Gastrocnemius medialis (tissue), 4 donors: ENCODE measurements at regions of chr13 and their contacts with region 1.

Region 1: DNA sequence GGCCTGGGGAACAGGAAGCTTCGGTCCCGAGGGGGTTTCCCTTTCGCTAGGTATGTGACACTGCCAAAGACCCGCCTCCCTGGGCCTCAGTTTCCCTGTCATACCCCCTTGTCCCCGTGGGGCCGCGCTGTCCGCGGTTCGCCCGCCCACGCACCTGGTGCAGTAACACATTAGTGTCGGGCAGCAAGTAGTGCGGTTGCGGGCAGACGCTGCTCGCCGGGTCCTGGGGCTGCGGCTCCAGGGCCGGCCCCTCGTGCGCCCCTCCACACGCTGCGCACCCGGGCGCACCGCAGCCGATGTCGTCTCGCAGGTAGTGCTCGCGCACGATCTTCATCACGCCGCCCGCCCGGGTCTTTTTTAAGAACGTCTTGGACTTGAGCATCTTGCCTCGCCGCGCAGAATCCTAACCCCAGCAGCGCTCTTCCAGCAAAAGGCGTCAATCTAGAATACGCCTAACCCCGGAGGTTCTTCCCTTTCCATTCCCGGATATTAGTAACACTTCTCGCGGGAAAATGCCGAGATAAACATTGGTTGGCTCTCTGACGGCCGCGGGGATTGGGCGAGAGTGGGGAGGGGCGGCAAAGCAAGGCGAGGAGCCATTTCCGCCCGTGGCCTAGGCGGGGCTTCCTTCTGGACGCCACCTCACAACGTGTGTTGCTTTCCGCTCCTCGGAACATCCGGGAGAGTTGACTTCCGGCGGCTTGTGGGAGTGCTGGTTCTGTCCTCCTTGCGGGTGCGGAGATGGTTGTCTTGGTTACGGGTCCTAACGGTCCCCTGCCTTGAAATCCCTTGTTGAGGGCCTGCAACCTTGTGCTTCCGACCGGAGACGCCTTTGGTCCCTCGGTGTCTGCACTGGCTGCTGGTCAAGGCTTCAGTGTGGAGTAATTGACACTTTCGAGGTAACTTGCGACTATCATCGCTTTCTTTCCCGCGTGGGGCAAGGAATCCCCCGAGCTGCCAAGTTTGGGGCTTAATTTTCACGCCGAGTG is at the starts of genes DIS3 and PIBF1:
- DNase-seq: peak; percentile 96
- ATAC-seq: peak; percentile 99 to 100
- H3K4me3 ChIP-seq: peak within 1 kb of the TSS; percentile 76 to 89 (median 86)
- H3K27ac ChIP-seq: peak within 1 kb of the TSS; percentile 86 to 91 (median 88)
- H3K4me1 ChIP-seq: peaks cover 26 to 27% of the 10 kb centered on the region in 2 donors
- H3K27me3 ChIP-seq: no peaks in the 10 kb centered on the region
- CTCF ChIP-seq: peak in 2 of 5 experiments; percentile 13 to 23
- POLR2A ChIP-seq: peak; percentile 77 to 83
- total RNA-seq, gene DIS3: 11.6 to 17.6 (median 17.0) TPM
- total RNA-seq, gene PIBF1: 5.3 to 10.0 (median 7.4) TPM

Region 2: DNA sequence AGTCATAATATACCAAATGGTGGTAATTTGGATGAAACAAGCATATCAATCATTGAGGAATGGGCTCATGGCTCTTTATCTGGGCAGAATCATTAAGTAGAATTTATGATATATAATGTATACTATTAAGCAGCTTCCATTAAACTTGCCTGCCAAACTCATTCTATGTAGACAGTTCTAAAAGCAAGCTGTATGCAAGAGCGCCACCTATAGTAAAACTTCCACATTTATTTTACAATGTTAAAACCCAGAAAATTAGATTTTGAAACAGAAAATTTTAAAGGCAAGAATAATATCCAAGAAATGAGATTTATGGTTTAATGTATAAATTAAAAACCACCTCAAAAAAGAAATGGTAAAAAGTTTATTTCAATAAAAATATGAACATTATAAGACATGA is 215.9 kb before region 1 on chr13:
- in situ Hi-C with region 1: no loop called
- intact Hi-C with region 1: no loop called
- DNase-seq: no peak
- ATAC-seq: no peak
- H3K4me3 ChIP-seq: no peak overlapping the region
- H3K27ac ChIP-seq: no peak overlapping the region
- H3K4me1 ChIP-seq: no peaks in the 10 kb centered on the region
- H3K27me3 ChIP-seq: no peaks in the 10 kb centered on the region
- CTCF ChIP-seq: peak in 1 of 5 experiments; percentile 37
- POLR2A ChIP-seq: no peak

Region 3: GRCh38 chr13:72727417-72728289 is 54.1 kb before region 1 on chr13 and contains the starts of genes BORA and MZT1:
- in situ Hi-C with region 1: loop called in 1 of 4 experiments (anchors 5 kb)
- intact Hi-C with region 1: loop called (anchors 1 kb)
- DNase-seq: peak; percentile 89 to 94
- ATAC-seq: peak; percentile 98
- H3K4me3 ChIP-seq: peak within 1 kb of the TSS; percentile 75 to 90 (median 82)
- H3K27ac ChIP-seq: peak within 1 kb of the TSS; percentile 71 to 81 (median 76)
- H3K4me1 ChIP-seq: peaks cover 8 to 18% of the 10 kb centered on the region in 2 donors
- H3K27me3 ChIP-seq: no peaks in the 10 kb centered on the region
- CTCF ChIP-seq: no peak
- POLR2A ChIP-seq: peak in 1 of 2 donors; percentile 24
- total RNA-seq, gene BORA: 0.97 to 4.0 (median 1.4) TPM
- total RNA-seq, gene MZT1: 7.7 to 17.0 (median 10.7) TPM